PC-3 (cell line): ENCODE measurements at regions of chr2 and their contacts with region 1.

Region 1: GRCh38 chr2:55050133-55050994 is at the start of gene RTN4:
- DNase-seq: peak; percentile 99
- ATAC-seq: peak; percentile 74
- H3K4me3 ChIP-seq: peak within 1 kb of the TSS; percentile 74
- H3K27ac ChIP-seq: peak within 1 kb of the TSS; percentile 97
- H3K4me1 ChIP-seq: peaks cover 26% of the 10 kb centered on the region
- H3K27me3 ChIP-seq: no peaks in the 10 kb centered on the region
- CTCF ChIP-seq: no peak
- total RNA-seq, gene RTN4: 150 and 170 TPM in 2 replicates

Region 2: GRCh38 chr2:54763636-54764291 is 286.6 kb before region 1 on chr2:
- CTCF ChIA-PET with region 1: no interaction called
- POLR2A ChIA-PET with region 1: no interaction called
- intact Hi-C with region 1: no loop called
- DNase-seq: no peak
- ATAC-seq: no peak
- H3K4me3 ChIP-seq: no peak overlapping the region
- H3K27ac ChIP-seq: no peak overlapping the region
- H3K4me1 ChIP-seq: peaks cover 38% of the 10 kb centered on the region
- H3K27me3 ChIP-seq: no peaks in the 10 kb centered on the region
- CTCF ChIP-seq: peak; percentile 39

Region 3: DNA sequence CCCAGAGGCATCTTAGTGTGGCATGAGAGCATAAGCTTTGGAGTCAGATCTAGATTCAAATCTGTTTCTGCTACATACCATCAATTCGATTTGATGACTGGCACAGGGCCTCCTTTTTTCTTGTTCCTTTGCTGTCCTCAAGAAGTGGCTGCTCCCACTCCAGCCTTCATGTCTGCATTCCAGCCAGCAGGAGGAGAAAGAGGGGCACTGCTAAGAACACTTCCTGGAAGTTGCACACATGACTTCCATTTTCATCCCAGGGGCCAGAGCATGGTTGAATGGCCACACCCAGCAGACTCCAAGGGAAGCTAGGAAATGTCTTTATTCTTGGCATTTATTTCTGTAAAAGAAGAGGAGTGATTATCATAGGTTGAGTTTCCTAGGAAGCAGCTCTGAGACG is 276.5 kb before region 1 on chr2:
- CTCF ChIA-PET with region 1: no interaction called
- POLR2A ChIA-PET with region 1: interaction called, 3 read pairs
- intact Hi-C with region 1: loop called (anchors 5 kb)
- DNase-seq: peak; percentile 40
- ATAC-seq: no peak
- H3K4me3 ChIP-seq: no peak overlapping the region
- H3K27ac ChIP-seq: peak overlapping the region; percentile 92; the same call in 1 of the 2 replicates
- H3K4me1 ChIP-seq: peaks cover 31% of the 10 kb centered on the region
- H3K27me3 ChIP-seq: no peaks in the 10 kb centered on the region
- CTCF ChIP-seq: peak; percentile 52

Region 4: GRCh38 chr2:55099878-55100820 is 49.8 kb after region 1 on chr2:
- CTCF ChIA-PET with region 1: no interaction called
- POLR2A ChIA-PET with region 1: interaction called, 6 read pairs
- intact Hi-C with region 1: loop called (anchors 2 kb)
- DNase-seq: peak; percentile 53
- ATAC-seq: peak; percentile 69
- H3K4me3 ChIP-seq: no peak overlapping the region
- H3K27ac ChIP-seq: peak overlapping the region; percentile 44
- H3K4me1 ChIP-seq: peaks cover 42% of the 10 kb centered on the region
- H3K27me3 ChIP-seq: no peaks in the 10 kb centered on the region
- CTCF ChIP-seq: no peak

Region 5: DNA sequence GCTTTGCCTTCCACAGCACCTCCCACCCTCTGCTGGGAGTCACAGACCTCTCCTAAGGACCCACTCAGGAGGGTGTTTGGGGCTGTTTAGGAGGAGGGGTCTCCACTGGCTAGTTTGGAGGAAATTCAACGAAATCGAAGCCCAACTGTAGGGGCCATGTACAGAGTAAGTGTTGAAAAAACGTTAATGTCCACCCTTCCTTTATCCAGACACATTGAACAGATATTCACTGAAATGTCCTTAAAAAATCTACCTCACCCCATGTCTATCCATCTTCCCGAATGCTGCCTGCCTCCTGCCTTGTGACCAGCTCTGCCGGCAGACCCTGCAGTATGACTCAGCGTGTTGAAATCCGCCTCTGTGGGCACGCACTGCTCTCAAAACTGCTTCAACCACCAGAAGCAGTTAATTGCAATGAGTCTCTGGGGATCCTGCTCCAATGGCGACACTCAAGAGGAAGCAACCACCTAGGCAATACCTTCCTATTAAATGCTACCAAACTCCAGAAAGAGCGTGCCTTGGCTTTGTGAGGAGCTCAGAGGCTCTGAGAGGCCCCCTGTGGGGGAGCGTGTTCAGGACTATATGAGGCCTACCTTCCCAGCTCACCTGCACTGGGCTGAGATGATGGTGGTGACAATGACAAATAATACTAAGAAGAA is 61.3 kb after region 1 on chr2:
- CTCF ChIA-PET with region 1: interaction called, 10 read pairs
- POLR2A ChIA-PET with region 1: interaction called, 6 read pairs
- intact Hi-C with region 1: loop called (anchors 2 kb)
- DNase-seq: peak; percentile 89
- ATAC-seq: peak; percentile 73
- H3K4me3 ChIP-seq: no peak overlapping the region
- H3K27ac ChIP-seq: peak overlapping the region; percentile 47
- H3K4me1 ChIP-seq: peaks cover 65% of the 10 kb centered on the region
- H3K27me3 ChIP-seq: no peaks in the 10 kb centered on the region
- CTCF ChIP-seq: no peak

Region 6: DNA sequence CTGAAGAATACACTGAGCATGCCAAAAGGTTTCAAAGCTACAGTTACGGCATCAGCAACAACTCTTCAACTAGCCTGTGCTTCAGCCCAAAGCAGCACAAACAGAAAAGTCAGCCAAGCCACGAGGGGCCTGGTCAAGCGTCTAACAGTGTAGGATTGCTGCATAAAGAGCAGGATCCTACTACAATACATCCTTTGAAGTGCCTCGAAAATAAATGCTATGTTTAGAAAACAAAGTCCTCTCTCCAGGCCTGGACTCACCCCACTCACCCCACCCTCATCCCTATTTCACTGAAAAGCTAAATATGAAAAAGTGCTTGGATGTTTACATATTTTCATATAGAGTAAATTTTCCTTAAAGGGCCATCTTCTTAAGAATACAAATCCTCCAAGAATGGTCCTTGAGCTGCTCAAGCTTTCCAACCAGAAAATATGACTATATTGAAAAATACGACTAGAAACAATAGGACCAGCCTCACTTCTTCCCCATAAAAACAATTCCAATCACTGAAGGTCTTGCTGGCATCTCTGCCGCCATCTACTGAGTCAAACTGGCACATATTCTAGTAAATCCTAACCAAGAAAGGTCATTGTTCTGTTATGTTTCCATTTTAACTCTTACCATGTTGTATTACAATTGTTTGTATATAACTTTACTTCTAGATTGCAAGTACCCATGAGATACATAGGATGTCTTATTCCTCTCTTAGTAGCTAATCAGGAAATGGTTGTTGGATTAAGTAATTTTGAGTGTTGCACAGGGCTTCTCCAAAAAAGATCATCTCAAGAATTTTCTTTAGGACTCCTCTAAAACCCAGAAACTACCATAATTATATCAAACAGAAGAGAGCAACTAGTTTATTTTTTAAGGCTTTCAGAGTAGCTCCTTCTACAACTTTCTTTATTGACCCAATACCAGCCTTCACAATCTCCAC is 118.1 kb after region 1 on chr2:
- CTCF ChIA-PET with region 1: interaction called, 5 read pairs
- POLR2A ChIA-PET with region 1: interaction called, 4 read pairs
- intact Hi-C with region 1: loop called (anchors 1 kb)
- DNase-seq: peak; percentile 77
- ATAC-seq: peak; percentile 60
- H3K4me3 ChIP-seq: no peak overlapping the region
- H3K27ac ChIP-seq: no peak overlapping the region
- H3K4me1 ChIP-seq: peaks cover 23% of the 10 kb centered on the region
- H3K27me3 ChIP-seq: no peaks in the 10 kb centered on the region
- CTCF ChIP-seq: peak; percentile 92